Right cardiac atrium (tissue), 5 donors: ENCODE measurements at regions of chr9 and their contacts with region 1.

Region 1: GRCh38 chr9:88578121-88579054 is 43.4 kb downstream of the NXNL2 start:
- DNase-seq: peak; percentile 83 to 93 (median 92)
- ATAC-seq: peak; percentile 87 to 90
- H3K4me3 ChIP-seq: no peak overlapping the region
- H3K27ac ChIP-seq: no peak overlapping the region
- H3K4me1 ChIP-seq: no peaks in the 10 kb centered on the region
- H3K27me3 ChIP-seq: no peaks in the 10 kb centered on the region

Region 2: DNA sequence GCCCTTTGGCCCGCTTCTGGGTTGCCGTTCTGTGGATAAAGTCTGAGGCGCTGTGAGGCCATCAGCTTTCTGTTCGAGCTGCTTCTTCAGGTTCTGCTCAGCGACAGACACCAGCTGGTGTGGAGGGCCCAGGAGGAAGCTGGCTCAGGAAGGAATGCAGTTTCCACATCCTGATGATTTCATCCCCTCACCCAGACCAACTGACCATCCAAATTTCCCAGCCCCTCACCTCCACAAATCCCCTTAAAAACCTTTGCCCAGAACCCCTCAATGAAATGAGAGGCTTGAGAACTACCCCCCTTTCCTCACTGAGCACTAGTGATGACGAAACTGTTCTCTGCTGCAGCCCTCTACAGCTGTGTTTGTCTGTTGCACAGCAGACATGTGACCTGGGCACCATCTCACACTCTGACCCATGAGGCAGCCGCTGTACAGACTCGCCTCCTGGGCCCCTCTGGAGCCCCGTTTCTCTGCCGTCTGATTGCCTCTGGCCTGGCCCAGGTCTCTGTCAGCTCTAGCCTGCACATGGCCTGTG is 485.5 kb before region 1 on chr9:
- intact Hi-C with region 1: loop called in 1 of 4 experiments (anchors 10 kb)
- DNase-seq: peak; percentile 45 to 72 (median 68)
- ATAC-seq: peak; percentile 74 to 80
- H3K4me3 ChIP-seq: no peak overlapping the region
- H3K27ac ChIP-seq: peak overlapping the region; percentile 4
- H3K4me1 ChIP-seq: peaks cover 7% of the 10 kb centered on the region
- H3K27me3 ChIP-seq: no peaks in the 10 kb centered on the region

Region 3: GRCh38 chr9:88106491-88106890 is 471.9 kb before region 1 on chr9:
- intact Hi-C with region 1: loop called in 3 of 4 experiments (anchors 5 to 10 kb)
- DNase-seq: no peak
- ATAC-seq: peak in 1 of 2 donors; percentile 56
- H3K4me3 ChIP-seq: no peak overlapping the region
- H3K27ac ChIP-seq: no peak overlapping the region
- H3K4me1 ChIP-seq: no peaks in the 10 kb centered on the region
- H3K27me3 ChIP-seq: peaks cover 4% of the 10 kb centered on the region

Region 4: DNA sequence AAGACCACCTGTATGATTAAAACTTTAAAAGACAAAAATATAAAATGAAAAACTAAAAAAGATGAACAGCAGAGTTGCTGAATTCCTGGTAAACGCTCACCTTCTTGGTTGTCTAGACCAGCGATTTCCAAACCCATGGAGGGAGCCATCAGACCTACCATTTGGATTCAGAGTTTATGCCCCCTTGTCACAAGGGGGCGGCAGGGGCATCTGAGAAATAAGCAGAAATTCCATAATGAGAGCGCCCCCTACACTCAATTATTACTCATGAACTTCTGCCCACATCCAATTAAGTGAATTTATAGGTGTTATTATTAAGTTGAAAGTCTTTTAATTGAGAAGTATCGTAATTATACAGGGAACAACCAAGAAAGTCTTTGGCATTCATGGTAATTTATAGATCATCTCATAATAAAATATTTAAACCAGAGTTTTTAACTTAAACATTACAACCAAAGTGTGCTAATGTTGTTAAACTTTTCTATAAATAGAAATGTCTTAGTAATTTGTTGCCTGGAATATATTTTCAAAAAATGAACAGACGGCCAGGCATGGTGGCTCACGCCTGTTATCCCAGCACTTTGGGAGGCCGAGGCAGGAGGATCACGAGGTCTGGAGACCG is 404.9 kb before region 1 on chr9:
- intact Hi-C with region 1: loop called in 1 of 4 experiments (anchors 10 kb)
- DNase-seq: peak; percentile 28 to 78 (median 65)
- ATAC-seq: peak in 1 of 2 donors; percentile 55
- H3K4me3 ChIP-seq: no peak overlapping the region
- H3K27ac ChIP-seq: no peak overlapping the region
- H3K4me1 ChIP-seq: no peaks in the 10 kb centered on the region
- H3K27me3 ChIP-seq: no peaks in the 10 kb centered on the region

Region 5: DNA sequence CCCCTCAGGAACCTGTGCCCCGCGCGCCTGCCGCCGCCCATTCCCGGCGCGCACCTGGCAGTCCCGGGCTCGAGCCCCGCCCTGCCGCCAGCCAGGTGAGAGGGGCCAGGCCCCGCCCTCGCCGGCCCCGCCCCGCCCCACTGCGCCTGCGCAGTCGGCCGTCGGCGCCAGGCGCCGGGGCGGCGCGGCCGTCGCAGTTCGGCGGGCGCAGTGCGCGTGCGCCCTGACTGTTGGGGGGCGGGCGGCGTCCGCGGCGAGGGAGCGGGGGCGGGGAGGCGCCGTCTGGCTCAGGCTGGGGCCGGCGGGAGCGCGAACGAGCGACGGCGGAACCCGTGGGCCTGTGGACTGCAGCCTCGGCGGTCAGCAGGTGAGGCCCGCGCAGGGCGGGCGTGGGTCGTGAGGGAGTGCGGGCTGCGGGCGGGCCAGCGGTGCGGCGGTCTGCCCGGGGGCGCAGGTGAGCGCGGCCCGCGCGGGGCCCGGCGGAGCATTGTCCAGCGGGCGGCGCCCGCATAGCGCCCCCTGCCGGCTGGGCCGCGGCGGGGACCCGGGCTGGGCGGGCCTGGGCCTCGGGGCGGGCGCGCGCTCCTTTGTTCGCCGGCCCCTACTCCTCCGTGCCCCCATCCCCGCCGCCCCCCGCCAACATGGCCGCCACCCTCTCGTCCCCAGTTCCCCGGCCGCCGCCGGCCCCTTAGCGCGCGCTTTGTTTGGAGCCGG is 190.1 kb before region 1 on chr9 and contains the start of gene SPIN1:
- intact Hi-C with region 1: loop called in 2 of 4 experiments (anchors 10 kb)
- DNase-seq: peak; percentile 87 to 95 (median 93)
- ATAC-seq: peak; percentile 82 to 90
- H3K4me3 ChIP-seq: peak within 1 kb of the TSS; percentile 99
- H3K27ac ChIP-seq: peak within 1 kb of the TSS; percentile 97
- H3K4me1 ChIP-seq: peaks cover 3% of the 10 kb centered on the region
- H3K27me3 ChIP-seq: no peaks in the 10 kb centered on the region
- total RNA-seq, gene SPIN1: 71.3 to 78.4 (median 75.6) TPM